Endothelial cell of umbilical vein (primary cell): ENCODE measurements at regions of chr7 and their contacts with region 1.

Region 1: DNA sequence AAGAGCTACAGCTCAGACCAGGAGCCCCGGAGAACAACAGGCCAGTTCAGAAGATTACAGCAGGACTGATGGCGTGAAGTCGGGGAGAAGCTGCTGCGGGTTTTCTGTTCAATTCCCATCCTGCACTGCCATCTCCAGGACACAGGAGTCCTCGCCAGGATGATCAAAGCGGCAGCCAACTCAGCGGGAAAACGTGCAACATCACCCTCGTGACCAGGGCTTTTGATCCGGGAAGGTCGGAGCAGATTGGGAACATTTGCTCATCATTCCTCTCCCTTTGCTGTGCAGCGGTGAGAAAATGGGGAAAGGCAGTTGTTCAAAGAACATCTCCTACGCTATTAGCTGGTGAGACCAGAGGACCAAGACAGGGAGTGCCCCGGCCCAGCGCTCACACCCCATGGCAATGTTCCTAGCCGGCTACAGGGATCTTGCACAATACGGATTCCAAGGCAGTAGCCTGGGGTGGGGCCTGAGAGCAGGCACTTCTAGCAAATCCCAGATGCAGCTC is 50.4 kb upstream of the FOXK1 start:
- DNase-seq: peak; percentile 76
- H3K4me3 ChIP-seq: no peak overlapping the region
- H3K27ac ChIP-seq: no peak overlapping the region
- H3K4me1 ChIP-seq: peaks cover 3% of the 10 kb centered on the region
- H3K27me3 ChIP-seq: no peaks in the 10 kb centered on the region
- CTCF ChIP-seq: peak; percentile 65 to 66
- POLR2A ChIP-seq: no peak

Region 2: GRCh38 chr7:3922175-3922635 is 709.5 kb before region 1 on chr7:
- CTCF ChIA-PET with region 1: no interaction called
- POLR2A ChIA-PET with region 1: no interaction called
- dilution Hi-C with region 1: no loop called
- intact Hi-C with region 1: loop called (anchors 10 kb)
- DNase-seq: peak; percentile 78
- H3K4me3 ChIP-seq: no peak overlapping the region
- H3K27ac ChIP-seq: peak overlapping the region; percentile 31
- H3K4me1 ChIP-seq: peaks cover 9% of the 10 kb centered on the region
- H3K27me3 ChIP-seq: no peaks in the 10 kb centered on the region
- CTCF ChIP-seq: peak; percentile 2 to 22
- POLR2A ChIP-seq: no peak

Region 3: DNA sequence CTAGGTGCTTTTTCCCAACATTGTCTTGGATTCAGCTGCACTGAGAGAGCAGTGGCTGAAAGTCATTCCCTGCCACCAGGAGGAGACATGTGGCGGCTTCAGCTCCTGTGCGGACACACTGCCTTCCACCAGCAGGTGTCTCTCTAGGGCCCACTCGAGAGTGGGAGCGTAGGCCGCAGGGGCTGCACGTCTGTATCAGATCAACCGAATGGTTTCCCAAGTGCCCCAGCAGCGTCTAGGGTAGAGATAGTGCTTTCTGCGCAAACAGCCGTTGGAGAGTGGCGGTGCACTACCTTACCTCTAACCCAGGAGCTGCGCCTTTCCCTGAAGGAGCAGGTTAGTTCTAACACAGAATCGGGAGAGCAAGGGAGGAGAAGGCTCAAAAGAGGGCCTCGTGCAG is 198.5 kb after region 1 on chr7:
- CTCF ChIA-PET with region 1: no interaction called
- POLR2A ChIA-PET with region 1: no interaction called
- dilution Hi-C with region 1: no loop called
- intact Hi-C with region 1: no loop called
- DNase-seq: peak; percentile 80
- H3K4me3 ChIP-seq: no peak overlapping the region
- H3K27ac ChIP-seq: no peak overlapping the region
- H3K4me1 ChIP-seq: no peaks in the 10 kb centered on the region
- H3K27me3 ChIP-seq: no peaks in the 10 kb centered on the region
- CTCF ChIP-seq: peak; percentile 98 to 100
- POLR2A ChIP-seq: no peak